PC-3 (cell line): ENCODE measurements at regions of chrX and their contacts with region 1.

Region 1: DNA sequence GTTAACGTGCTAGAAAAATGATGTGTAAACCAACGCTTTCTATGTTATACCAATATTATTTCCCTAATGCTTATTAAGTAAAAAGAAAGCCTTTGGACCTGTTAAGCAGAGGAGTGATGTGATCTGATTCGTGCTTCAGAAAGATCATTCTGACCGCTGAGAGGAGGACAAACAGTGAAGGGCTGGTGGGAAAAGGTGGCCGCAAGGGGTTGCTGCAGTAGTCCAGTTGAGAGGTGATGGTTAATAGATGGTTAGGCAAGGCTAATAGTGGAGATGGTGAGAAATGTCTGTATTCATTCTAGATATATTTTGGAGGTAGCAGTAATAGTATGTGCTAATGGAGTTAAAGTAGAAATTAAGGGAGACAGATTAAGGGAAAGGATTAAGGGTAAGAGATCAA is 12.9 kb upstream of the VGLL1 start:
- DNase-seq: no peak
- ATAC-seq: 0 out of 2 replicates have a peak, but pooled peaks have one; percentile 27
- H3K4me3 ChIP-seq: no peak overlapping the region
- H3K27ac ChIP-seq: no peak overlapping the region
- H3K4me1 ChIP-seq: 0 out of 2 replicates have a peak, but pooled peaks cover 4% of the 10 kb centered on the region
- H3K27me3 ChIP-seq: no peaks in the 10 kb centered on the region
- CTCF ChIP-seq: peak; percentile 26; the same call in 1 of the 2 replicates

Region 2: DNA sequence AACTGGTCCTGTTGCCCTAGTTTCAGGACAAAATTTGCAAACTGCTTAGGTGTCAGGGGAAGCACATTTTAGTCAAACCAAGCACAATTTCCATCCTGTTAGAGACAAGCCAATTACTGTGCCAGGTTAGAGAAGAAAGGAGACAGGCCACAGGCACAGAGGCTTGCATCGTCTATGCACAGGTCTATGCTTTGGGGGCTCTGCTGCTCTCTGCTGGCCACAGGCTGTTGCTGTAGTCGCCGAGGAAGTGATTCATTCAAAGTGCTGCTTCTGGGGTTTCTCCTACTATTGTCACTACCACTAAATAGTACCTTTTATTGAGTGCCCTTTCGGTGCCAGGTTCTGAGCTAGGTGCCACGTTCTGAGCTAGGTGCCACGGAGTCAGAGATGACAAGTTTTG is 58.5 kb after region 1 on chrX:
- CTCF ChIA-PET with region 1: interaction called, 3 read pairs
- POLR2A ChIA-PET with region 1: no interaction called
- intact Hi-C with region 1: loop called (anchors 1 kb)
- DNase-seq: peak; percentile 69
- ATAC-seq: peak; percentile 99
- H3K4me3 ChIP-seq: no peak overlapping the region
- H3K27ac ChIP-seq: no peak overlapping the region
- H3K4me1 ChIP-seq: peaks cover 12% of the 10 kb centered on the region; the same call in 1 of the 2 replicates
- H3K27me3 ChIP-seq: no peaks in the 10 kb centered on the region
- CTCF ChIP-seq: peak; percentile 76